CD14-positive monocyte (primary cell): ENCODE measurements at regions of chr2 and their contacts with region 1.

Region 1: DNA sequence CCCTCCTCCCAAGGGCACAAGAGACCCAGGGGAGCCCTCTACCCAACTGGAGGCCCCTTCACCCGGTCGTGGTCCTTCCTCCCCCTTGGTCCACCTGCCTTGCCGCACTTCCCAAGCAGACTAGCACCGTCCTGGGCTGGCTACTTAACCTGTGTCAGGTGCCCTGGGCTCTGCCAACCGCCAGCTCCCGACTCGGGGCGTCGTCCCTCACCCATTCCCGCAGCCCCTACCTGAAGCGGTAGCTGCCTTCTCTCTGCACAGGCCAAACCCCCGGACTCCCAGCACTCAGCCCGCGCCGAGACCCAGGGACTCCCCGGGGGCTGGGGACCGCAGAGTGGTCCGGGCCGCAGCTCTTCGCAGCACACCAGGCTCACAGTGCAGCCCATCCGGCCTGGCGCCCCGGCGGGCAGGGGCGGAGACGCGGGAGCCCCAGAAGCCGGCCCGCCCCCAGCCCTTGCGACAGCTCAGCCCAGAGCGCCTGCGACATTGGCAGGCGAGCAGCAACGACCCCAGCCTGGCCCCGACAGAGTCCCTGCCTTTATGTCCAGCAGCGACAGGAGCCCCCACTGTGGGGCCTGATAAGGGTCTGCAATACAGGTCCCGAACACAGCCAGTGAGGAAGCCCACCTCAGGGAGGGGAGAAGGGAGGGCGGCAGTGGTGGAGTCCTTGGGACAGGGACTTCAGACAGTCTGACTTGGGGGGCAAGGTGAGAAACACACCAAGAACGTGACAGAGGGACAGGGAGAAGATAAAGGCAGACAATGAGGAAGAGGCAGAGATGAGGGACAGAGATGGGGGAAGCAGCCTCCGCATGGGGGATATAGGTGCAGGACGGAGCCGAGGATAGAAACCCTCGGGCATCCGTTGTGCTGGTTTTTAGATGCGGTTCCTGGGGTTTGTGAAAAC is 31.0 kb upstream of the TNS1 start:
- DNase-seq: peak; percentile 19 to 32 (median 31)
- H3K4me3 ChIP-seq: peak overlapping the region; percentile 42 to 75 (median 62)
- H3K4me3 Mint-ChIP-seq: peak overlapping the region; percentile 84 to 90
- H3K27ac ChIP-seq: peak overlapping the region; percentile 79 to 89
- H3K27ac Mint-ChIP-seq: peak overlapping the region; percentile 68 to 96 (median 87)
- H3K4me1 ChIP-seq: peaks cover 46 to 56% of the 10 kb centered on the region in 2 donors
- H3K4me1 Mint-ChIP-seq: peaks cover 49% of the 10 kb centered on the region
- H3K27me3 ChIP-seq: no peaks in the 10 kb centered on the region
- H3K27me3 Mint-ChIP-seq: peaks cover 0 to 6% (median 0%) of the 10 kb centered on the region in 3 donors
- CTCF ChIP-seq: no peak

Region 2: DNA sequence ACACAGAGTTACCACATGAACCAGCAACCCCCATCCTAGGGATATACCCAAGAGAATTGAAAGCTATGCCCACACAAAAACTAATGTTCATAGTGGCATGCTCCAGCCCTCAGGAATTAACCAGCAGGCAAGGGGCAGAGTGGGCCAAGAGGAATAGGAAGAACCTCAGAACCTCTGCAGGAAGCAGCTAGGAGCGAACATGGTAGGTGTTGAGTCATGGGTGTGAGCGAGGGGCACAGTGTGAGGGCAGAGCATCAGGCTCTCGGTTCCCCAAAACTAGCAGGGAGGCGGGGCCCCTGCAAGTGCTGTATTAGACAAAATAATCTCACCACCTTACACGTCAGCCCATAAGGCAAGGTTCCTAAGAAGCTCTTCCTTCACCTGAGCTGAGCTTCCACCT is 29.6 kb after region 1 on chr2:
- intact Hi-C with region 1: loop called in 1 of 2 experiments (anchors 5 kb)
- DNase-seq: peak; percentile 87 to 92 (median 89)
- H3K4me3 ChIP-seq: peak overlapping the region in 1 of 3 experiments; percentile 57
- H3K4me3 Mint-ChIP-seq: peak overlapping the region; percentile 58 to 87
- H3K27ac ChIP-seq: peak overlapping the region; percentile 82 to 84
- H3K27ac Mint-ChIP-seq: peak overlapping the region; percentile 90 to 95 (median 93)
- H3K4me1 ChIP-seq: peaks cover 89 to 90% of the 10 kb centered on the region in 2 donors
- H3K4me1 Mint-ChIP-seq: peaks cover 83% of the 10 kb centered on the region
- H3K27me3 ChIP-seq: no peaks in the 10 kb centered on the region
- H3K27me3 Mint-ChIP-seq: peaks cover 0 to 3% (median 0%) of the 10 kb centered on the region in 3 donors
- CTCF ChIP-seq: no peak

Region 3: DNA sequence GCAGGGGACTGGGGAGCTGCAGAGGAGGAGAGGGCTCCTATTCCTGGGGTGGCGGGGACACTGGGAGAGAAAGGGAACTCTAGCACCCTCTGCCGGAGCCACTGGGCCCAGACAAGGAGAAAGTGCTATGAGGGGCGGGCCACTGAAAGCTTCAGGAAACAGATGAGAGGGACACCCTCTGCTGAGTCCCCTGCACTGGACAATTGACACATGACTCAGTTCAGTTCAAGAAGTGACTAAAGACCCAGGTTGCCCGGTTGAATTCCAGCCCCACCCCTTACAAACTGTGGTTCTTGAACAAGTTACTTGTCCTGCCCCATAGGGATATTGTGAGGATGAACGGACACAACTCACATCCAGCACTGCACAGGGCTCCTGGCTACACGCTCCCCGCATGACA is 40.2 kb after region 1 on chr2:
- intact Hi-C with region 1: loop called (anchors 5 kb)
- DNase-seq: peak; percentile 53 to 64 (median 58)
- H3K4me3 ChIP-seq: no peak overlapping the region
- H3K4me3 Mint-ChIP-seq: no peak overlapping the region
- H3K27ac ChIP-seq: no peak overlapping the region
- H3K27ac Mint-ChIP-seq: no peak overlapping the region
- H3K4me1 ChIP-seq: peaks cover 17 to 29% of the 10 kb centered on the region in 2 donors
- H3K4me1 Mint-ChIP-seq: peaks cover 28% of the 10 kb centered on the region
- H3K27me3 ChIP-seq: no peaks in the 10 kb centered on the region
- H3K27me3 Mint-ChIP-seq: peaks cover 0 to 3% (median 1%) of the 10 kb centered on the region in 3 donors
- CTCF ChIP-seq: peak; percentile 81

Region 4: DNA sequence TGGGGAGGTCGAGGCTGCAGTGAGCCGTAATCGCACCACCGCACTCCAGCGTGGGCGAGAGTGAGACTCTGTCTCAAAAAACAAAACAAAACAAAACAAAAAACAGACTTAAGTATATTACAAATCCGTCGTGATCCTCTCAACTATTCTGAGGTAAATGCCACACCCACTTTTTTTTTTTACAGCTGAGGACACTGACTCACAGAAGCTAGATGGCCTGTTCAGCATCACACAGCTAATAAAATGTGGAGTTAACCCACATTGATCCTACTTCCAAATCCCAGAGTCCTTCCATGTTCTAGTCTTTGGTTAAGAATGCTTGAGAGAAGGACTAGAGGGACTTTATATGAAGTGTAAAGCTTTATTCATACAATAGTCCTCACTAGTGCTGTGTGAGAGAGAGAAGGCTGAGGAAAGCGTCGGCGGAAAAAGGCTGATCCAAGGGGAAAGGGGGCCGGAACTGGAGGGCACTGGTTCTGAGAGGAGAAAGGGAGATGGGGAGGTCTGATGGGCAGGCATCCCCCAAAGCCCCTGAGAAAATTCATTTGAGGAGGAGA is 637.3 kb after region 1 on chr2:
- intact Hi-C with region 1: no loop called
- DNase-seq: no peak
- H3K4me3 ChIP-seq: peak overlapping the region; percentile 55 to 98 (median 62)
- H3K4me3 Mint-ChIP-seq: peak overlapping the region; percentile 96 to 99
- H3K27ac ChIP-seq: peak overlapping the region; percentile 10 to 81
- H3K27ac Mint-ChIP-seq: peak overlapping the region; percentile 86 to 97 (median 90)
- H3K4me1 ChIP-seq: peaks cover 16 to 20% of the 10 kb centered on the region in 2 donors
- H3K4me1 Mint-ChIP-seq: peaks cover 22% of the 10 kb centered on the region
- H3K27me3 ChIP-seq: no peaks in the 10 kb centered on the region
- H3K27me3 Mint-ChIP-seq: no peaks in the 10 kb centered on the region
- CTCF ChIP-seq: no peak